CD8-positive, alpha-beta T cell (primary cell): ENCODE measurements at regions of chr12 and their contacts with region 1.

Region 1: DNA sequence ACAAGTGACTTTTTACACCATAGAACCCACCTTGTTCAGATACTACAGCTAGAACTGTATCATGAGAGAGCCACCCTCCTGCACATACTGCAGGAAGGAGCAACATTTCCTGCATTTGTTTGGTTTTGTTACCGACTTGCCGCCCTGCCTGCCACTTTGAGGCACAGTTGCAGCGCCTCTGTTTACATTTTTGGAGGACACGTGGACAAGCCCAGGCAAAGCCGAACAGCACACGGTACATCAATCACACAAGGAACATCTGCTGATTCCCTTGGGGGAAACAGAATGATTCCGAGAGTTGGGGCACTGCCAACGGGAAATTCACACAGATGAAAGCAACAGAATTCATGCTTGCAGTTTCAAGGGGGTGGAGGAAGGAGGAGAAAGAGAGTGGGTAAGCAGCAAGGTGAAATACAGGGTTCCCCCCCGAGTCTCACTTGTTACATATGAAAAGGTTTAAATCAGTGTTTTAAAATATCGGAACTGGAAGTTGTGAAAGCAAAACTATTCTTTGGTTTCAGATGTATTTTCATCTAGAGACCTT is 110.7 kb downstream of the BTG1 start:
- DNase-seq: peak; percentile 12 to 84 (median 63)
- ATAC-seq: peak; percentile 57
- H3K4me3 ChIP-seq: peak overlapping the region; percentile 38 to 41
- H3K4me3 Mint-ChIP-seq: peak overlapping the region; percentile 86
- H3K27ac ChIP-seq: peak overlapping the region; percentile 61 to 83
- H3K27ac Mint-ChIP-seq: peak overlapping the region; percentile 98
- H3K4me1 ChIP-seq: peaks cover 84% of the 10 kb centered on the region
- H3K4me1 Mint-ChIP-seq: peaks cover 96% of the 10 kb centered on the region
- H3K27me3 ChIP-seq: no peaks in the 10 kb centered on the region
- H3K27me3 Mint-ChIP-seq: no peaks in the 10 kb centered on the region
- CTCF ChIP-seq: no peak

Region 2: GRCh38 chr12:91985002-91985787 is 49.7 kb before region 1 on chr12:
- CTCF ChIA-PET with region 1: interaction called, 3 read pairs
- POLR2A ChIA-PET with region 1: interaction called, 3 read pairs
- intact Hi-C with region 1: loop called (anchors 5 kb)
- DNase-seq: peak in 4 of 9 experiments; percentile 20 to 48 (median 27)
- ATAC-seq: peak; percentile 62
- H3K4me3 ChIP-seq: no peak overlapping the region
- H3K4me3 Mint-ChIP-seq: peak overlapping the region; percentile 32
- H3K27ac ChIP-seq: no peak overlapping the region
- H3K27ac Mint-ChIP-seq: peak overlapping the region; percentile 78
- H3K4me1 ChIP-seq: peaks cover 20% of the 10 kb centered on the region
- H3K4me1 Mint-ChIP-seq: peaks cover 59% of the 10 kb centered on the region
- H3K27me3 ChIP-seq: no peaks in the 10 kb centered on the region
- H3K27me3 Mint-ChIP-seq: no peaks in the 10 kb centered on the region
- CTCF ChIP-seq: no peak

Region 3: GRCh38 chr12:92010853-92011701 is 23.9 kb before region 1 on chr12:
- CTCF ChIA-PET with region 1: interaction called, 7 read pairs
- POLR2A ChIA-PET with region 1: interaction called, 13 read pairs
- intact Hi-C with region 1: loop called in 1 of 2 experiments (anchors 1 kb)
- DNase-seq: no peak
- ATAC-seq: peak; percentile 17
- H3K4me3 ChIP-seq: no peak overlapping the region
- H3K4me3 Mint-ChIP-seq: peak overlapping the region; percentile 76
- H3K27ac ChIP-seq: peak overlapping the region in 1 of 2 experiments; percentile 26
- H3K27ac Mint-ChIP-seq: peak overlapping the region; percentile 92
- H3K4me1 ChIP-seq: peaks cover 32% of the 10 kb centered on the region
- H3K4me1 Mint-ChIP-seq: peaks cover 45% of the 10 kb centered on the region
- H3K27me3 ChIP-seq: no peaks in the 10 kb centered on the region
- H3K27me3 Mint-ChIP-seq: no peaks in the 10 kb centered on the region
- CTCF ChIP-seq: no peak

Region 4: DNA sequence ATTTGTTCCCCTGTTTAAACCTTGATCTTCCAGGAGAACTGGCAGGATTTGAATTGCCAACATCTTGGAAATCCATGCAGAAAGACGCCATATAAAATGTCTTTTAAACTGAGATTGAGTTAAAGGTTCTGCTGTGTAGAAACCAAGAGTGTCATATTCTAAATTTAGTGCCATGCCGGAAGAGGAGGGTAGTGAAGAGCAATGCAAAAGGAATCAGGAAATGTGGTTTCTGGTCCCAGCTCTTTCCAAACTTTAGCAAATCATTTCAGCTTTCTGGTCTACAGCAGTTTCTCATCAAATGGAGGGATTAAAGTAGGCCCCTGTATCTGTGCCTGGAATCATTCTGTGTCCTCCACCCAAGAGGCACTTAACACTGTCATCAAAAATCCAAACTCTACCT is 25.0 kb after region 1 on chr12:
- CTCF ChIA-PET with region 1: interaction called, 3 read pairs
- POLR2A ChIA-PET with region 1: interaction called, 3 read pairs
- intact Hi-C with region 1: loop called (anchors 2 kb)
- DNase-seq: no peak
- ATAC-seq: no peak
- H3K4me3 ChIP-seq: no peak overlapping the region
- H3K4me3 Mint-ChIP-seq: no peak overlapping the region
- H3K27ac ChIP-seq: no peak overlapping the region
- H3K27ac Mint-ChIP-seq: peak overlapping the region; percentile 6
- H3K4me1 ChIP-seq: peaks cover 41% of the 10 kb centered on the region
- H3K4me1 Mint-ChIP-seq: peaks cover 79% of the 10 kb centered on the region
- H3K27me3 ChIP-seq: no peaks in the 10 kb centered on the region
- H3K27me3 Mint-ChIP-seq: no peaks in the 10 kb centered on the region
- CTCF ChIP-seq: no peak

Region 5: DNA sequence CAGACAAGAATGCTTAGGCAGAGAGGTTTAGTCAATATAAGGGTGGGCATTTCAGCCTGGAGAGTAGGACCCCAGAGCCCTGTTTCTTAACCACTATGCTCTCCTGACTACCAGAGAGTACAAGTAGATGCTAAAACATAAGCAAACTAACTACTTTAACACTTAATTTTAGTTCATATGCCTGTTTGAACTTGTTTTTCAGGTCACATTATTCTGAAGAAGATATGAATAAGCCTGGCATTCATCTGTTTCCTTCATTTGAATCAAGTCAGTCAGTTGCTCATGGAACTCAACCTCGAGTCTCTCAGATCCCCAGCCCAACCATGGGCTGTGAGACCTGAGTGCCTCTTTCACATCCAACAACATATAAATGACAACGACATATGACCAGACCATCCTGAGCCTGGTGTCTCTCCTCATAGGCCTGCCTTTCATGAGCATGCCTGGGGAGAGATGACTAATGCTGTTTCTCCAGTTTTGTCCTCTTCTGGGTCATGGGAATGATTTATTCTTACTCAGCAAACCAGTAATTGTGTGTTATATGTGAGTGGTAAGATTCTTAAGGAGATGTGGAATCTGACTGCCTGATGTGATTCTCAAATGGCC is 361.8 kb after region 1 on chr12:
- CTCF ChIA-PET with region 1: no interaction called
- POLR2A ChIA-PET with region 1: interaction called, 5 read pairs
- intact Hi-C with region 1: loop called in 1 of 2 experiments (anchors 1 kb)
- DNase-seq: no peak
- ATAC-seq: no peak
- H3K4me3 ChIP-seq: no peak overlapping the region
- H3K4me3 Mint-ChIP-seq: peak overlapping the region; percentile 4
- H3K27ac ChIP-seq: peak overlapping the region; percentile 2 to 46
- H3K27ac Mint-ChIP-seq: peak overlapping the region; percentile 95
- H3K4me1 ChIP-seq: peaks cover 88% of the 10 kb centered on the region
- H3K4me1 Mint-ChIP-seq: peaks cover 93% of the 10 kb centered on the region
- H3K27me3 ChIP-seq: no peaks in the 10 kb centered on the region
- H3K27me3 Mint-ChIP-seq: no peaks in the 10 kb centered on the region
- CTCF ChIP-seq: no peak